Naive thymus-derived CD4-positive, alpha-beta T cell (primary cell): ENCODE measurements at regions of chr15 and their contacts with region 1.

Region 1: GRCh38 chr15:74382004-74382816 is 14.8 kb upstream of the CYP11A1 start:
- DNase-seq: peak; percentile 40 to 84 (median 68)
- ATAC-seq: peak; percentile 79
- H3K4me3 ChIP-seq: no peak overlapping the region
- H3K4me3 Mint-ChIP-seq: peak overlapping the region in 1 of 10 donors; percentile 25
- H3K27ac ChIP-seq: no peak overlapping the region
- H3K27ac Mint-ChIP-seq: peak overlapping the region in 1 of 9 donors; percentile 61
- H3K4me1 ChIP-seq: peaks cover 6 to 32% of the 10 kb centered on the region in 2 donors
- H3K4me1 Mint-ChIP-seq: peaks cover 0 to 60% (median 16%) of the 10 kb centered on the region in 7 donors
- H3K27me3 ChIP-seq: no peaks in the 10 kb centered on the region
- H3K27me3 Mint-ChIP-seq: no peaks in the 10 kb centered on the region

Region 2: GRCh38 chr15:74402873-74403587 is 20.8 kb after region 1 on chr15:
- CTCF ChIA-PET with region 1: interaction called, 3 read pairs
- POLR2A ChIA-PET with region 1: no interaction called
- intact Hi-C with region 1: loop called in 1 of 2 experiments (anchors 2 kb)
- DNase-seq: peak in 6 of 9 donors; percentile 26 to 80 (median 32)
- ATAC-seq: peak; percentile 75
- H3K4me3 ChIP-seq: peak overlapping the region; percentile 10
- H3K4me3 Mint-ChIP-seq: peak overlapping the region in 9 of 10 donors; percentile 19 to 67 (median 49)
- H3K27ac ChIP-seq: no peak overlapping the region
- H3K27ac Mint-ChIP-seq: peak overlapping the region in 7 of 9 donors; percentile 2 to 85 (median 49)
- H3K4me1 ChIP-seq: peaks cover 43 to 57% of the 10 kb centered on the region in 2 donors
- H3K4me1 Mint-ChIP-seq: peaks cover 40 to 70% (median 53%) of the 10 kb centered on the region in 7 donors
- H3K27me3 ChIP-seq: no peaks in the 10 kb centered on the region
- H3K27me3 Mint-ChIP-seq: no peaks in the 10 kb centered on the region

Region 3: GRCh38 chr15:74433592-74434262 is 51.5 kb after region 1 on chr15 and contains the start of gene SEMA7A:
- CTCF ChIA-PET with region 1: interaction called, 93 read pairs
- POLR2A ChIA-PET with region 1: interaction called, 3 read pairs
- intact Hi-C with region 1: loop called (anchors 1 kb)
- DNase-seq: peak; percentile 32 to 90 (median 53)
- ATAC-seq: peak; percentile 87
- H3K4me3 ChIP-seq: peak within 1 kb of the TSS; percentile 50
- H3K4me3 Mint-ChIP-seq: peak within 1 kb of the TSS; percentile 72 to 88 (median 78)
- H3K27ac ChIP-seq: no peak within 1 kb of the TSS
- H3K27ac Mint-ChIP-seq: peak within 1 kb of the TSS in 4 of 9 donors; percentile 65 to 89 (median 72)
- H3K4me1 ChIP-seq: peaks cover 6 to 35% of the 10 kb centered on the region in 2 donors
- H3K4me1 Mint-ChIP-seq: peaks cover 7 to 57% (median 16%) of the 10 kb centered on the region in 7 donors
- H3K27me3 ChIP-seq: no peaks in the 10 kb centered on the region
- H3K27me3 Mint-ChIP-seq: peaks cover 0 to 3% (median 0%) of the 10 kb centered on the region in 5 donors
- total RNA-seq, gene SEMA7A: 1.6 to 15.7 (median 5.0) TPM

Region 4: DNA sequence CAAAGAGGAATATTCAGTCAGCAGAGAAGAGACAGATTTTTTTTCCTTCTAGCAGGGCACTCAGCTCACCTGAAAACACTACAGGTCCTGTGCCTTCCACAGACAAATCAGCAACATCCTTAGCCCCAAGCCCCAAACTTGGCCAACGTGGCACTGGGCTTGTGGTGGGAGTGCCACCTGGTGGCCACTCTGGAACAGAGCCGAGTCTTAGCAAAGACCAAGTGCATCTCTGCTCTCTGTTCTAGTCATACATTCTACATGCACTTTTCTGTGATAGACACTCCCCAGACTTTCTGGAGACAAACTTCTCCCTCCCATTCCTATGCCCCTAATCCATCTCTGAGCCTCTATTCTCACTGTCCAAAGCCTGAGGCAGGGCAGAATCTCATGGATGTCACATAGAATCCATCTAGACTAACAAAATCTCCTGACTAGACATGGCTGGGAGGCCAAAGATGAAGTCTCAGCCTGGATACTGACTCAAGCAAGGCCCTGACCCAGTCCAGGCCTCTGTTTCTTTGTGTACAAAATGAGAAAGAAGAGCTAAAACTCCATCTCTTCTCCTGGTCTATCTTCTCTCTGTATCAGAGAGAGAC is 56.6 kb after region 1 on chr15:
- CTCF ChIA-PET with region 1: interaction called, 93 read pairs
- POLR2A ChIA-PET with region 1: interaction called, 4 read pairs
- intact Hi-C with region 1: loop called (anchors 1 kb)
- DNase-seq: peak; percentile 52 to 76 (median 72)
- ATAC-seq: peak; percentile 84
- H3K4me3 ChIP-seq: no peak overlapping the region
- H3K4me3 Mint-ChIP-seq: no peak overlapping the region
- H3K27ac ChIP-seq: no peak overlapping the region
- H3K27ac Mint-ChIP-seq: peak overlapping the region in 3 of 9 donors; percentile 11 to 55 (median 43)
- H3K4me1 ChIP-seq: peaks cover 6 to 11% of the 10 kb centered on the region in 2 donors
- H3K4me1 Mint-ChIP-seq: peaks cover 7 to 30% (median 15%) of the 10 kb centered on the region in 7 donors
- H3K27me3 ChIP-seq: no peaks in the 10 kb centered on the region
- H3K27me3 Mint-ChIP-seq: no peaks in the 10 kb centered on the region

Region 5: DNA sequence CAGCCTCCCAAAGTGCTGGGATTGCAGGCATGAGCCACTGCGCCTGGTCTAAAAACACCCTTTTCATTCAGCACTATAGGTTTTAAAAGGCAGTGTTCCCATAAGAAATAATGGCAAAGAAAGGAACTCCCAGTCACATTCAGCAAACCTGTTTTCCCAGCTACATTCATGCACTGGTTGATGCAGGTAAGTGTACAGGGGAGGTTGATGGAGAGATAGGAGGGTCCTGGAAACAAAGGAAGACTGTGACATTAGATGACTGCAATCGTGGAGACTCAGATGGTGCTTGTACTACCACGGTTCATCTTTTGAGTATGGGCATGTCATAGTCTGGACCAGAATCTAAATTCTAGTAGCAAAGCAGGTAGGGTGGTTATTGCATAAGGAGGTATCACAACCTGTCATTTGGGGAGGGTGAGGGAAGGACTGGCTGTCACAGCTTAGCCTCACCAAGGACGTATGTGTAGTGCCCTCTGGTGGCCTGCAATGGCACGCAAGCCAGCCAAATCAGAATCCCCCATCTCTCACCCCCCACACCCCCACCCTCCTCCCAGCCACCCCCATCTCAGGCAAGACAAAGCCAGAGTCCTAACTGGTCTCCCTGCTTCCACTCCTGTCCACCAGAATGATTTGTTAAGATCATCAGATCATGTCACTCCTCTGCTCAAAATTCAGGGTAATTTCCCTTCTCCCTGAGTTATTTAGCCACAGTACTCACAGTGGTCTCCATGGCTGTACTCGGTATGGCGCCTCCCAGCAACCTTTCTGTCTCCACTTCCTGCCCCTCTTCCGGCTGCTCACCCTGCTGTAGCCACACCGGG is 107.5 kb after region 1 on chr15:
- CTCF ChIA-PET with region 1: interaction called, 4 read pairs
- POLR2A ChIA-PET with region 1: no interaction called
- intact Hi-C with region 1: loop called in 1 of 2 experiments (anchors 1 kb)
- DNase-seq: peak; percentile 26 to 67 (median 51)
- ATAC-seq: peak; percentile 97
- H3K4me3 ChIP-seq: no peak overlapping the region
- H3K4me3 Mint-ChIP-seq: peak overlapping the region in 7 of 10 donors; percentile 7 to 40 (median 25)
- H3K27ac ChIP-seq: no peak overlapping the region
- H3K27ac Mint-ChIP-seq: peak overlapping the region in 6 of 9 donors; percentile 39 to 71 (median 62)
- H3K4me1 ChIP-seq: peaks cover 5 to 11% of the 10 kb centered on the region in 2 donors
- H3K4me1 Mint-ChIP-seq: peaks cover 7 to 20% (median 13%) of the 10 kb centered on the region in 7 donors
- H3K27me3 ChIP-seq: no peaks in the 10 kb centered on the region
- H3K27me3 Mint-ChIP-seq: no peaks in the 10 kb centered on the region